Naive thymus-derived CD4-positive, alpha-beta T cell (primary cell): ENCODE measurements at regions of chr6 and their contacts with region 1.

Region 1: DNA sequence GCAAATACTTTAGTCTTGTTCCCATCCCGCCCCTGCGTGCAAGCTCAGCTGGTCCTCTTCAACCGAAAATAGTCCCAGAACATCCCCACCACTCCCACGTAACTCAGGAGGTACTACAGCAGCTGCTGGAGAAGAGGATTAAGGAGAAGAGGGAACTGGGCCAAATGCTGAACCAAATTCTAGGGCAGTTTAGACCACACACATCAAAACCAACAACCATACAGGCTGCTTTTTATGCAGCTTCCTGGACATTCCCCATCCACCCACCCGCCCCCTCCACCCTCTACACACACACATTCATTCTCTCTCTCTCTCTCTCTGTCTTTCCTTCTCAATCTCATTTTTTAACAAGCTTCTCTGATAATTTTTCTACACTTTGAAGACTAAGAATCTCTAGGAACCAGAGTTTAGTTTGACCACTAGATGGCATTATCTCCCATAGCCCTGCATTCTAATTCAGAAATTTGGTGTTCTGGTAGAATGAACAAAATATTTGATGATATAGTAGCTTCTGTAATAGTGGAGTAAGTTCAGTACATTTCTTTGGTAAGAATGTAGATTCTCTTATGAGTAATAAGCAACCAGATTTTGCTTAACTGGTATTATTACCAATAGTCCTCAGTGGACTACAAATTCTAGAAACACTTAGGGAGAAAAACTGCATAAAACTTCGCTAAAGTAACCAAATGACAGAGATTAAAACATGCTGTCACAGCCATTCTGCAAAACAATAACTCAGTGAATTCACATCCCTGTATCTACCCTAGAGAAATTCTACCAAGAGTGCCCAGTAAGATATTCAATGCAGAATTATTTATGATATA is 52.1 kb upstream of the BEND6 start:
- DNase-seq: peak in 6 of 9 donors; percentile 18 to 44 (median 28)
- ATAC-seq: peak; percentile 61
- H3K4me3 ChIP-seq: no peak overlapping the region
- H3K4me3 Mint-ChIP-seq: no peak overlapping the region
- H3K27ac ChIP-seq: no peak overlapping the region
- H3K27ac Mint-ChIP-seq: no peak overlapping the region
- H3K4me1 ChIP-seq: no peaks in the 10 kb centered on the region
- H3K4me1 Mint-ChIP-seq: no peaks in the 10 kb centered on the region
- H3K27me3 ChIP-seq: no peaks in the 10 kb centered on the region
- H3K27me3 Mint-ChIP-seq: peaks cover 4 to 26% (median 6%) of the 10 kb centered on the region in 5 donors

Region 2: GRCh38 chr6:56772737-56773184 is 130.1 kb before region 1 on chr6:
- CTCF ChIA-PET with region 1: no interaction called
- POLR2A ChIA-PET with region 1: no interaction called
- intact Hi-C with region 1: no loop called
- DNase-seq: no peak
- ATAC-seq: no peak
- H3K4me3 ChIP-seq: no peak overlapping the region
- H3K4me3 Mint-ChIP-seq: no peak overlapping the region
- H3K27ac ChIP-seq: no peak overlapping the region
- H3K27ac Mint-ChIP-seq: no peak overlapping the region
- H3K4me1 ChIP-seq: no peaks in the 10 kb centered on the region
- H3K4me1 Mint-ChIP-seq: no peaks in the 10 kb centered on the region
- H3K27me3 ChIP-seq: no peaks in the 10 kb centered on the region
- H3K27me3 Mint-ChIP-seq: peaks cover 0 to 6% (median 3%) of the 10 kb centered on the region in 5 donors

Region 3: GRCh38 chr6:56961157-56961556 is 58.3 kb after region 1 on chr6:
- CTCF ChIA-PET with region 1: interaction called, 3 read pairs
- POLR2A ChIA-PET with region 1: no interaction called
- intact Hi-C with region 1: loop called in 1 of 2 experiments (anchors 1 kb)
- DNase-seq: no peak
- ATAC-seq: no peak
- H3K4me3 ChIP-seq: no peak overlapping the region
- H3K4me3 Mint-ChIP-seq: no peak overlapping the region
- H3K27ac ChIP-seq: no peak overlapping the region
- H3K27ac Mint-ChIP-seq: no peak overlapping the region
- H3K4me1 ChIP-seq: no peaks in the 10 kb centered on the region
- H3K4me1 Mint-ChIP-seq: no peaks in the 10 kb centered on the region
- H3K27me3 ChIP-seq: no peaks in the 10 kb centered on the region
- H3K27me3 Mint-ChIP-seq: peaks cover 24 to 49% (median 33%) of the 10 kb centered on the region in 5 donors

Region 4: DNA sequence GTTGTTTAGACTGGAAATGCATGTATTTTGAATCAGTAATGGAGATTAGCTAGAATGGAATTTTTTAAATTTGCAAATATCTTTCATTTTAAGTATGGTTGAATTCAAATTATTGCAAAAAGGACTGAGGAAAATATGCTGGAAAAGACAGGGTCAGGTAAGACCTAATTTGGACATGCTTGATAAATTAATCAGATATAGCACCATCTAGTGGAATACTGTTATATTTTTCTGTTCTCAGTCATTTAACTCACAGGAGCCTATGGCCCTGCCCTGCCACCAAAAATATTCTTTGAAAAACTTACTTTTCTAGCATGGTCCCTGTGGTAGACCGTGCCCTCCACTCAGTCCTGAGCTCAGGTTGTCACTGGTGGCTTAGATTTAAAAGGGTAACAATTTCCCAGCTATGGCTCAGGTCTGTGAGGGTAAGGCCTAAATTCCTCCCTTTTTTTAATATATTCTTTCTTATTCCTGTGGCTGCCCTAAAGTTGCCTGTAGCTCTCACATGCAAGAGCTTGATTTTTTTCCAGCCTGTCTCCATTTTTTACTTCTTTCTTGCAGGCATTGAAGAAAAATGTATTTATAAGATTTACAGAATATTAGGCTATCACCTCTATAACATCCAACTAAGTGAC is 118.3 kb after region 1 on chr6:
- CTCF ChIA-PET with region 1: interaction called, 9 read pairs
- POLR2A ChIA-PET with region 1: no interaction called
- intact Hi-C with region 1: loop called (anchors 1 kb)
- DNase-seq: peak in 5 of 9 donors; percentile 7 to 35 (median 15)
- ATAC-seq: peak; percentile 76
- H3K4me3 ChIP-seq: no peak overlapping the region
- H3K4me3 Mint-ChIP-seq: no peak overlapping the region
- H3K27ac ChIP-seq: no peak overlapping the region
- H3K27ac Mint-ChIP-seq: no peak overlapping the region
- H3K4me1 ChIP-seq: no peaks in the 10 kb centered on the region
- H3K4me1 Mint-ChIP-seq: no peaks in the 10 kb centered on the region
- H3K27me3 ChIP-seq: no peaks in the 10 kb centered on the region
- H3K27me3 Mint-ChIP-seq: peaks cover 4 to 30% (median 11%) of the 10 kb centered on the region in 5 donors

Region 5: DNA sequence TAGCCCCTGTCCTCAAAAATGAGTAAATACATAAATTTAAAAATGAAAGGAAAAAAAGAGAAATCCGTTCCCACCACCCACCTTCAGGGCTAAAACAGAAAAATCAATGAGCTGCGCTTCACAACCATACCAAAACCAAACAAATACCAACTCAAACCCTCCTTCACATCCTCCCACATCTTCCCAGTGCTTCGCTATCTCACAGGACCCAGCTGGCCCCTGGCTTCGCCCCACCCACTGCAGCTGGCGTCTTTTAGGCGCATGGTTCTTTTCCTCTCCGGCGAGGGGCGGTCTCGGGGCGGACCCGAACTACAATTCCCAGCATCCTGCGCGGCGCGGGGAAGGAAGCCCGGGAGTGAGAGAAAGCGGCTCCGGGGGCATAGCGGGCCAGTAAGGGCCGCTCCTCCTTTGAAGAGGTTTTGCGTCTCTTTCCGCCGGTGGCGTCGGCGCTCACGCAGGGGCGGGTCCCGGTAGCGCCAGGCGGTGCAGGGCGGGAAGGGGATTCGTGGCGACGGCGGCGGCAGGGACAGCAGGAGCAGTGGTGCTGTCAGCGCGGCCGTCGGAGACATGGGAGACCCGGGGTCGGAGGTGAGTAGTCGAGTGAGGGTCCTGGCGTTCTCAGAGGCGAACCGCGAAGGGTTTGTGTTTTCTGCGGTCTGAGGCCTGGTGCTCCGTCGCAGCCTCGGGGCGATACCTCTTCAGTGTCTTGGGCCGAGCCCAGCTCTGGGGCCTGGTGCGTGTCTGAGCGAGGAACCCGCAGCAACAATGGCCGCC is 187.0 kb after region 1 on chr6 and contains the start of gene ZNF451:
- CTCF ChIA-PET with region 1: no interaction called
- POLR2A ChIA-PET with region 1: no interaction called
- intact Hi-C with region 1: loop called in 1 of 2 experiments (anchors 5 kb)
- DNase-seq: peak; percentile 88 to 97 (median 94)
- ATAC-seq: peak; percentile 96
- H3K4me3 ChIP-seq: peak within 1 kb of the TSS; percentile 64
- H3K4me3 Mint-ChIP-seq: peak within 1 kb of the TSS; percentile 85 to 94 (median 90)
- H3K27ac ChIP-seq: peak within 1 kb of the TSS; percentile 78
- H3K27ac Mint-ChIP-seq: peak within 1 kb of the TSS; percentile 79 to 94 (median 90)
- H3K4me1 ChIP-seq: peaks cover 24% of the 10 kb centered on the region in 2 donors
- H3K4me1 Mint-ChIP-seq: peaks cover 22 to 44% (median 34%) of the 10 kb centered on the region in 7 donors
- H3K27me3 ChIP-seq: no peaks in the 10 kb centered on the region
- H3K27me3 Mint-ChIP-seq: no peaks in the 10 kb centered on the region
- total RNA-seq, gene ZNF451: 63.4 to 116 (median 96.6) TPM

Region 6: GRCh38 chr6:57172136-57173055 is 269.5 kb after region 1 on chr6 and contains the start of gene BAG2:
- CTCF ChIA-PET with region 1: interaction called, 3 read pairs
- POLR2A ChIA-PET with region 1: no interaction called
- intact Hi-C with region 1: loop called (anchors 5 to 10 kb)
- DNase-seq: peak; percentile 75 to 91 (median 85)
- ATAC-seq: peak; percentile 91
- H3K4me3 ChIP-seq: peak within 1 kb of the TSS; percentile 57
- H3K4me3 Mint-ChIP-seq: peak within 1 kb of the TSS; percentile 88 to 99 (median 92)
- H3K27ac ChIP-seq: peak within 1 kb of the TSS; percentile 87
- H3K27ac Mint-ChIP-seq: peak within 1 kb of the TSS; percentile 90 to 99 (median 93)
- H3K4me1 ChIP-seq: peaks cover 4 to 12% of the 10 kb centered on the region in 2 donors
- H3K4me1 Mint-ChIP-seq: peaks cover 10 to 61% (median 56%) of the 10 kb centered on the region in 7 donors
- H3K27me3 ChIP-seq: no peaks in the 10 kb centered on the region
- H3K27me3 Mint-ChIP-seq: no peaks in the 10 kb centered on the region
- total RNA-seq, gene BAG2: 3.7 to 8.1 (median 5.1) TPM

Region 7: GRCh38 chr6:57221936-57222742 is 319.3 kb after region 1 on chr6 and contains the start of gene RAB23:
- CTCF ChIA-PET with region 1: no interaction called
- POLR2A ChIA-PET with region 1: no interaction called
- intact Hi-C with region 1: loop called (anchors 1 kb)
- DNase-seq: peak; percentile 70 to 94 (median 87)
- ATAC-seq: peak; percentile 92
- H3K4me3 ChIP-seq: peak within 1 kb of the TSS; percentile 86
- H3K4me3 Mint-ChIP-seq: peak within 1 kb of the TSS; percentile 89 to 100 (median 98)
- H3K27ac ChIP-seq: peak within 1 kb of the TSS; percentile 68
- H3K27ac Mint-ChIP-seq: peak within 1 kb of the TSS; percentile 85 to 95 (median 91)
- H3K4me1 ChIP-seq: no peaks in the 10 kb centered on the region
- H3K4me1 Mint-ChIP-seq: peaks cover 0 to 24% (median 10%) of the 10 kb centered on the region in 7 donors
- H3K27me3 ChIP-seq: no peaks in the 10 kb centered on the region
- H3K27me3 Mint-ChIP-seq: peaks cover 6 to 43% (median 13%) of the 10 kb centered on the region in 5 donors
- total RNA-seq, gene RAB23: 0.50 to 3.2 (median 2.0) TPM

Region 8: DNA sequence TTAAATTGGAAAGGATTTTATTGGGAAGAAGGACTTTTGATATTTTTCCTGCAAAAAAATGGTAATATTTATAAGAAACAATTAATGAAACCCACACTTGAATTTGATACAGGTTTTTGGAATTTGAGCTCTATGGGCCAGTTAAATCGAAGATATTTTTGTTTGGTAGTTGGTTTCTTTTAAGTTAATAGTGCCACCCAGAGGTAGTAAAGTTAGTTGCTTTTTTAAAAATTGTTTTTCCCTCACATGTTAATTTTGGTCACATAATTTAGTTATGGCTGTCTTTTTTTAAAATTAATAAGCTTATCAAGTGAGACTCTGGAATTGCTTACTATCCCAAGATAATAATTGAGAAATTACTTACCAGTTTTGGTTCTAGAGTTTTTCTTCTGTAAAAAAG is 421.7 kb after region 1 on chr6:
- CTCF ChIA-PET with region 1: interaction called, 99 read pairs
- POLR2A ChIA-PET with region 1: no interaction called
- intact Hi-C with region 1: loop called (anchors 1 kb)
- DNase-seq: peak in 5 of 9 donors; percentile 5 to 41 (median 31)
- ATAC-seq: no peak
- H3K4me3 ChIP-seq: no peak overlapping the region
- H3K4me3 Mint-ChIP-seq: no peak overlapping the region
- H3K27ac ChIP-seq: no peak overlapping the region
- H3K27ac Mint-ChIP-seq: no peak overlapping the region
- H3K4me1 ChIP-seq: no peaks in the 10 kb centered on the region
- H3K4me1 Mint-ChIP-seq: peaks cover 11 to 31% (median 20%) of the 10 kb centered on the region in 7 donors
- H3K27me3 ChIP-seq: no peaks in the 10 kb centered on the region
- H3K27me3 Mint-ChIP-seq: no peaks in the 10 kb centered on the region